ENCODE measurements at regions of chr7 and their contacts with region 1.

Region 1: GRCh38 chr7:90877201-90877600 is 281.1 kb downstream of the CDK14 start:
- DNase-seq: no peak
- H3K4me3 ChIP-seq: no peak overlapping the region
- H3K27ac ChIP-seq: no peak overlapping the region
- H3K4me1 ChIP-seq: peaks cover 11% of the 10 kb centered on the region
- H3K27me3 ChIP-seq: no peaks in the 10 kb centered on the region
- CTCF ChIP-seq: no peak

Region 2: DNA sequence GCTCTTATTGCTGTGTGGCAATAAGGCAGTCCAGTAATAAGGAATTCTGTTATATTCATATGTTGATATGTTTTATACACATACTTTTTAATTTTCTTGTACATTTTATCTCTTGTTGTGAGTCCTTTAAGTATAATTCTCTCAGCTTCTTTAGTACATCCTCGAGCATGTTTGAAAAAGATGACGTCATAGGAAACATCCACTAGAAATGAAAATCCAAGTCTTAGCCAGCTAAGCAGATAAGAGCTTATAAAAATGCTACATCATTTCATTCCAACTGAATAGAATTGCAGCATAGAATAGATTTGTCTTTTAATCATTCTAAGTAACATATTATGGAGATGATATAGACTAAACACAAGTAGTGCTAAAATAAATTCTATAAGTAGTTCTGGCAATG is 103.3 kb after region 1 on chr7:
- CTCF ChIA-PET with region 1: no interaction called
- POLR2A ChIA-PET with region 1: interaction called, 11 read pairs
- intact Hi-C with region 1: no loop called
- DNase-seq: no peak
- H3K4me3 ChIP-seq: no peak overlapping the region
- H3K27ac ChIP-seq: no peak overlapping the region
- H3K4me1 ChIP-seq: peaks cover 8% of the 10 kb centered on the region
- H3K27me3 ChIP-seq: no peaks in the 10 kb centered on the region
- CTCF ChIP-seq: no peak